ENCODE measurements at regions of chr22 and their contacts with region 1.

Region 1: GRCh38 chr22:22770280-22770871 is 117.2 kb upstream of the IGLL5 start:
- DNase-seq: no peak
- H3K4me3 ChIP-seq: no peak overlapping the region
- H3K27me3 ChIP-seq: no peaks in the 10 kb centered on the region; the same call in 1 of the 2 replicates
- CTCF ChIP-seq: peak; percentile 79

Region 2: GRCh38 chr22:22593964-22594656 is 176.3 kb before region 1 on chr22:
- CTCF ChIA-PET with region 1: no interaction called
- POLR2A ChIA-PET with region 1: no interaction called
- DNase-seq: no peak
- H3K4me3 ChIP-seq: no peak overlapping the region
- H3K27me3 ChIP-seq: no peaks in the 10 kb centered on the region; the same call in 1 of the 2 replicates
- CTCF ChIP-seq: peak; percentile 80

Region 3: DNA sequence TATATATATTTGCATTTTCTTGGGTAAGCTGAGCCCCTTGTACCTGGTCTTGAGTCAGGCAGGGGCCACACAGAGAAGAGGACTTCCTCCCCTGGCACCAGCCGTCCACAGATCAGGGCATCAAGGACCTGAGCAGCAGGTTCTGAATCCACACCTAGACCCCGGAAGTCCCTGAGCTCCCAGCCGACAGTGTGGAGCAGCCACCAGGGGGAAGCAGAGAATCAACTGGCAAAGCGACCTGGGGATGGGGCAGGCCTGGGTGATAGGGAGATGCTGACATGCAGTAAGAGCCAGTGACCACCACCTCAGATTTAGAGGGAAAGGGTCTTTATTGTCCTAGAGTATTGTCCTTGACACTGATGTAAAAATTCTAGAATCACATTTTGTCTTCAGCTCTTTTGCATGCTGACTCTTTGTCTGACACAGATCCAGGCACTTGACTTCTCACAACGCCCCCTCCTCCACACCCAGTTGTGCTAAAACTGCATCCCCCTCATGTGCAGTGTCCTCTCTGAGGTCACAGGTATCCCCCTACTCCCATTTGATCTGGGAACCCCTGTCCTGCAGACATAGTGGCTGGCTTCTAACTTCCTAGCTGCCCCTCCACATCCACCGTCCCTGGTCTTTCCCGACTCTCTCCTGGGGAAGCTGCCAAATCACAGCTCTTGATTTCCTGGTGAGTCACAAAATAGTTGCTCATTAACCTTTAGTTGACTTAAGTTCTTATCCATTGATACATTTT is 16.7 kb before region 1 on chr22:
- CTCF ChIA-PET with region 1: interaction called, 12 read pairs
- POLR2A ChIA-PET with region 1: no interaction called
- DNase-seq: no peak
- H3K4me3 ChIP-seq: no peak overlapping the region
- H3K27me3 ChIP-seq: no peaks in the 10 kb centered on the region
- CTCF ChIP-seq: peak; percentile 69

Region 4: GRCh38 chr22:22802339-22802970 is 32.1 kb after region 1 on chr22:
- CTCF ChIA-PET with region 1: no interaction called
- POLR2A ChIA-PET with region 1: no interaction called
- DNase-seq: no peak
- H3K4me3 ChIP-seq: no peak overlapping the region
- H3K27me3 ChIP-seq: no peaks in the 10 kb centered on the region
- CTCF ChIP-seq: no peak

Measured in BJ (cell line).